Activated CD8-positive, alpha-beta T cell treated with anti-CD3 and anti-CD28 coated beads, Interleukin-2, amount 10 ng/mL, durations not matched to agents 7 days and 5 days (primary cell): ENCODE measurements at regions of chr1 and their contacts with region 1.

Region 1: GRCh38 chr1:8878448-8879347 is at the start of gene ENO1:
- DNase-seq: peak; percentile 99
- ATAC-seq: peak; percentile 76
- H3K4me3 Mint-ChIP-seq: peak within 1 kb of the TSS; percentile 97
- H3K27ac Mint-ChIP-seq: peak within 1 kb of the TSS; percentile 96
- H3K4me1 Mint-ChIP-seq: peaks cover 37% of the 10 kb centered on the region
- H3K27me3 Mint-ChIP-seq: no peaks in the 10 kb centered on the region
- total RNA-seq, gene ENO1: 3,150 to 3,216 TPM

Region 2: DNA sequence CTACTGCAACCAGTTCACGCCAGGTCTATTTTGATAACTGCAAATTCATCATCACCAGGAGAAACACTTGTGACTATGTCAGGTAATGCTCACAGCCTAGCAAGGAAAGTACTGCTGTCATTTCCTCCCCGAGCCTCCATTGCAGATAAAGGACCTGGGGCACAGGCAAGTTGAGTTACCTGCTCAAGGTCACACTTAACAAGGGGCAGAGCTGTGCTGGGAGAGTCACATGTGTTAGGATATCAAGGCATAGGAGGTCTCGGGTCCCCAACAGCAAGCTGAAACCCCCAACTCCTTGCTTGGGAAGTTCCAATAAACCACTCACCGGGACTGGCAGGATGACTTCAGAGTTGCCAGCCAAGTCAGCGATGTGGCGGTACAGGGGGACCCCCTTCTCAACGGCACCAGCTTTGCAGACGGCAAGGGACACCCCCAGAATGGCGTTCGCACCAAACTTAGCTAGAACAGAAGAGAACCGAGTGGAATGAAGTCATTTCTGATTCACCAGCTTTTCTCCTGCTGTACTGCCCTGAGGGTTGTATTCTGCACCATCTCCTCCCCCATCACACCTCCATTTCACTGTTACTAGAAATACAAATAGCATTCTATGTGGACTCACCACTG is 11.8 kb before region 1 on chr1:
- CTCF ChIA-PET with region 1: interaction called, 17 read pairs
- POLR2A ChIA-PET with region 1: interaction called, 30 read pairs
- DNase-seq: no peak
- ATAC-seq: no peak
- H3K4me3 Mint-ChIP-seq: peak overlapping the region; percentile 19
- H3K27ac Mint-ChIP-seq: peak overlapping the region; percentile 72
- H3K4me1 Mint-ChIP-seq: peaks cover 87% of the 10 kb centered on the region
- H3K27me3 Mint-ChIP-seq: no peaks in the 10 kb centered on the region

Region 3: DNA sequence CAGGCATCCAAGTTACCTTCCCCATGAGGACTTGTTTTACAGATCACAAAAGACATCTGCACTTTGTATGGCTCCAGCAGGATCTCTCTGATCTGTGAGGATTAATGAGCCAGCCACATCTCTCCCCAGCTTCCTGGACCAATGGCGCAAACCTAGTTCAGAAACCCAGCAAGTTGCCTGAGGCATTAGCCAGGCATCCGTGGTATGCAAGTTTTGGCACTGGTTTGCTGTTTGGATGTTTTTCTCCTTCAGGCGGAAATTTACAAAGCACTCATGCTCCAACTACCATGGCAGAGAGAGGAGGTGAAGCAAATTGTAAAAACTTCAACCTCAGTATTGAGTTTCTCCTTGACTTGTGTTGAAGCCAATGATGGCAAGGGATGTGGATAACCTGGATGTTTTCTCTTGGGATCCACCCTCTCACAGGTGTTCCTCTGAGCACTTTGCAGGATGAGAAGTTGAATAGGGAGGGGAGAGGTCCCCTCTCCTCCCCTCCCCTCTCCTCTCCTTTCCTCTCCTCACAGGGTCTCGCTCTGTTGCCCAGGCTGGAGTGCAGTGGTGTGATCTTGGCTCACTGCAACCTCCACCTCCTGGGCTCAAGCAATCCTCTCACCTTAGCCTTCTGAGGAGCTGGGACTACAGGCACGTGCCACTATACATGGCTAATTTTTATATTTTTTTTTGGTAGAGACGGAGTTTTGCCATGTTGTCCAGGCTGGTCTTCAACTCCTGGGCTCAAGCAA is 25.4 kb after region 1 on chr1:
- CTCF ChIA-PET with region 1: interaction called, 3 read pairs
- POLR2A ChIA-PET with region 1: interaction called, 66 read pairs
- DNase-seq: no peak
- ATAC-seq: no peak
- H3K4me3 Mint-ChIP-seq: no peak overlapping the region
- H3K27ac Mint-ChIP-seq: peak overlapping the region; percentile 4
- H3K4me1 Mint-ChIP-seq: peaks cover 63% of the 10 kb centered on the region
- H3K27me3 Mint-ChIP-seq: no peaks in the 10 kb centered on the region

Region 4: GRCh38 chr1:8947127-8947691 is 68.5 kb after region 1 on chr1:
- CTCF ChIA-PET with region 1: no interaction called
- POLR2A ChIA-PET with region 1: interaction called, 17 read pairs
- DNase-seq: peak; percentile 51
- ATAC-seq: peak; percentile 9
- H3K4me3 Mint-ChIP-seq: peak overlapping the region; percentile 65
- H3K27ac Mint-ChIP-seq: peak overlapping the region; percentile 97
- H3K4me1 Mint-ChIP-seq: peaks cover 93% of the 10 kb centered on the region
- H3K27me3 Mint-ChIP-seq: no peaks in the 10 kb centered on the region

Region 5: GRCh38 chr1:8970870-8971337 is 92.2 kb after region 1 on chr1:
- CTCF ChIA-PET with region 1: interaction called, 4 read pairs
- POLR2A ChIA-PET with region 1: interaction called, 18 read pairs
- DNase-seq: peak; percentile 83
- ATAC-seq: peak; percentile 84
- H3K4me3 Mint-ChIP-seq: peak overlapping the region; percentile 99
- H3K27ac Mint-ChIP-seq: peak overlapping the region; percentile 98
- H3K4me1 Mint-ChIP-seq: peaks cover 32% of the 10 kb centered on the region
- H3K27me3 Mint-ChIP-seq: no peaks in the 10 kb centered on the region